Lower leg skin (tissue), 4 donors: ENCODE measurements at regions of chr12 and their contacts with region 1.

Region 1: GRCh38 chr12:87975879-87976278 is 53.3 kb downstream of the C12orf50 start:
- DNase-seq: no peak
- H3K4me3 ChIP-seq: no peak overlapping the region
- CTCF ChIP-seq: no peak
- POLR2A ChIP-seq: no peak

Region 2: DNA sequence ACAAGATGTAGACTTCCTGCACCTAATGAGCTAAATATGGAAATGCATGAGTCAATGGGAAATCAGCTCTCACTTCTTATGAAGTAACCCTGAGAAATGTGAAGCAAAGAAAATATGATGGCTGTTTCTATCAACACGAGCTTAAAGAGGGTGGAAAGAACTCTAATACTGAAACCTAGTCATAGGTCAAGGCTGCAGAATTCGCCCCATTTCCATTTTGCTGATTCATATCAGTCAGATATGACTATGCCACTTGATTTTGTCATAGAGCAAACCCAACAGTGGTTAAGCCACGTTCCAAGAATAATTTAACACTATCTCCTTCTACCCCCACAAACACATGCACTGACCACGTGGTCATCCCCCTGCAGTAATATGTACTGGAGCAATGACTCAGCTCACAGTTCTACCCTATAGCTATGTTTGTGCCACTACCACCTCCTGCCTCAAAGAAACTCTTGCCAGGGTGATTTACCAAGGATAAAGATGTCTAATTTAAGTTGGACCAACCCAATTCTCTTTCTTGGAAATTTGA is 323.8 kb after region 1 on chr12:
- intact Hi-C with region 1: loop called (anchors 5 kb)
- DNase-seq: no peak
- H3K4me3 ChIP-seq: no peak overlapping the region
- CTCF ChIP-seq: no peak
- POLR2A ChIP-seq: no peak